AG04450 (cell line): ENCODE measurements at regions of chr6 and their contacts with region 1.

Region 1: DNA sequence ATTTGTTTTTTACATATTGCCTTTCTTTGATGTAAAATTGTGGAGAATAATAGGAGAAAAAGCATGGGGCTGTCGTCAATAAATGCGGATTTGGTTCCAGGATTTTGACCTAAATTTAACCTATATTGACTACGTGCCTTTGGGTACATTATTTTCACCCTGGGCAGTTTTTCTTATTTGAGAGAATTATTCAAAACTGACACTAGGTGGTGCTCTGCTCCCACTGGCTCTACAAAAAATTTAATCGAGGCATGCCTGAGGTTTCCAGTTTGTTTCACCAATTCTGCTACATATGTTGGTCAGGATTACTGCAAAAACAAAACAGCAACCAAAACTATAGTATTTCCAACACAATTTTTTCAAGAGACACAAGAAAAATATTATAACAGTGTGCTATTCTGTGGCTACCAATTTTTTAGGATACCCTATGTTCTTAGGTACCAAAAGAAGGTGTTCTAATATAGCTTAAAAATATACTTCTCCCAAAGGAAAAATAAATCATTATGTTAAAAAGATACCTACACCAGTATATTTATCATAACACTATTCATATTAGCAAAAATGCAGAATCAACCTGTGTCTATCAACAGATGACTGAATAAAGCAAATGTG is 48.6 kb upstream of the FABP7 start:
- DNase-seq: no peak
- H3K4me3 ChIP-seq: no peak overlapping the region
- H3K27ac ChIP-seq: no peak overlapping the region
- H3K27me3 ChIP-seq: peaks cover 5% of the 10 kb centered on the region
- CTCF ChIP-seq: peak; percentile 84

Region 2: GRCh38 chr6:122399384-122400158 is 331.3 kb before region 1 on chr6 and contains the start of gene HSF2:
- CTCF ChIA-PET with region 1: no interaction called
- POLR2A ChIA-PET with region 1: no interaction called
- DNase-seq: peak; percentile 98
- H3K4me3 ChIP-seq: peak within 1 kb of the TSS; percentile 96
- H3K27ac ChIP-seq: peak within 1 kb of the TSS; percentile 77
- H3K27me3 ChIP-seq: no peaks in the 10 kb centered on the region
- CTCF ChIP-seq: peak; percentile 29
- polyA plus RNA-seq, gene HSF2: 26.7 and 34.4 TPM in 2 replicates

Region 3: GRCh38 chr6:122471107-122472021 is 259.5 kb before region 1 on chr6 and contains the start of gene SERINC1:
- CTCF ChIA-PET with region 1: interaction called, 10 read pairs
- POLR2A ChIA-PET with region 1: no interaction called
- DNase-seq: peak; percentile 88
- H3K4me3 ChIP-seq: peak within 1 kb of the TSS; percentile 95
- H3K27ac ChIP-seq: peak within 1 kb of the TSS; percentile 71
- H3K27me3 ChIP-seq: no peaks in the 10 kb centered on the region
- CTCF ChIP-seq: no peak
- polyA plus RNA-seq, gene SERINC1: 141 and 186 TPM in 2 replicates

Region 4: GRCh38 chr6:122609856-122610689 is 120.8 kb before region 1 on chr6 and contains the start of gene PKIB:
- CTCF ChIA-PET with region 1: interaction called, 13 read pairs
- POLR2A ChIA-PET with region 1: no interaction called
- DNase-seq: no peak
- H3K4me3 ChIP-seq: peak within 1 kb of the TSS; percentile 62
- H3K27ac ChIP-seq: no peak within 1 kb of the TSS
- H3K27me3 ChIP-seq: peaks cover 7% of the 10 kb centered on the region
- CTCF ChIP-seq: peak; percentile 43
- polyA plus RNA-seq, gene PKIB: 5.5 and 8.1 TPM in 2 replicates

Region 5: DNA sequence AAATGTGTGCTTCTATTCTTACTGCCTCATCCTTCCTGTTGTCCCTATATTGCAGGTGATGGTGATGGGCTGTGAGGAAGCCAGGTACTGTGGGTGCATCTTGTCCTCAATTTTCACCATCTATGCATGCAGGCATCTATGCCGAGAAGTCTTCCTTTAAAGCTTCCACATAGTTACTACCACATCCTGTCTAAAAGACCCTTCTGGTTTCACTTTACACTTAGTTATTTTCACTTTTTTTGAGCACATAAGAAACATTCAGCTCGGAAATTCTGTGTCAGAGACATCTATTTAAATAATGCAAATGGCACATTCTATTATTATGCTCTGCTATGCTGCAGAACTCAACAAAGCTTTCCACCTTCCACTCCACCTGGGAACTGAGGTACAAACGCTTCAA is 20.4 kb after region 1 on chr6:
- CTCF ChIA-PET with region 1: interaction called, 21 read pairs
- POLR2A ChIA-PET with region 1: no interaction called
- DNase-seq: no peak
- H3K4me3 ChIP-seq: no peak overlapping the region
- H3K27ac ChIP-seq: no peak overlapping the region
- H3K27me3 ChIP-seq: peaks cover 2% of the 10 kb centered on the region
- CTCF ChIP-seq: no peak

Region 6: DNA sequence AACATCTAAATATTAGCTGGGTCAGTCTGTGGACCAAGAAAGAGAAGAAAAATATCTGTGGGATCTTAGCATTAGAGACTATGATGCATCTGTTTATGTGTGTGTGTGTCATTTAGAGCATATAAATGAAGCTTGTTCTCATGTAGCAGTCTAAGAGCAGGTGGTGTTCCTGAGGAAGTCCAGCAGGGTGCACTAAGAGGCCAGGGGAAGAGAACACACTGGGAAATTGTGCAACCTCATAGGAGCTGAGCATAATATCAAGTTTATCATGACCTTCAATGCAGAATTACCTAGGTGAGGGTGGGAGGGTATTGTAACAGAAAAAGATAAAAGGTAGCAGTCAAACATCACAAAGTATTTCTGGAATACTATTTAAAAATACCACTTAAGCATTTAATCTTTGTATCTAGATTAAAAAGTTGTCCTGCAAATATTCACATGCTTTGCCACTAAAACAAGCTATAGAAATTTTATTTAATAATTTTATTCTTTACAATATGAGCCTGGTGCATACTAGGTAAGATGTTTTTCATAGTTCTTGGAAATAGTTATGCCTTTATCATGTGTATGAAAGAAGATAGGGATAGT is 138.7 kb after region 1 on chr6:
- CTCF ChIA-PET with region 1: interaction called, 10 read pairs
- POLR2A ChIA-PET with region 1: no interaction called
- DNase-seq: peak; percentile 8
- H3K4me3 ChIP-seq: no peak overlapping the region
- H3K27ac ChIP-seq: no peak overlapping the region
- H3K27me3 ChIP-seq: no peaks in the 10 kb centered on the region
- CTCF ChIP-seq: peak; percentile 68